ENCODE measurements at regions of chr6 and their contacts with region 1.

Region 1: GRCh38 chr6:26025894-26026832 is 61.1 kb upstream of the HFE start:
- DNase-seq: peak; percentile 96
- H3K4me3 Mint-ChIP-seq: peak overlapping the region; percentile 88
- H3K27ac Mint-ChIP-seq: peak overlapping the region; percentile 100
- H3K4me1 Mint-ChIP-seq: peaks cover 86% of the 10 kb centered on the region
- H3K27me3 Mint-ChIP-seq: peaks cover 3% of the 10 kb centered on the region

Region 2: DNA sequence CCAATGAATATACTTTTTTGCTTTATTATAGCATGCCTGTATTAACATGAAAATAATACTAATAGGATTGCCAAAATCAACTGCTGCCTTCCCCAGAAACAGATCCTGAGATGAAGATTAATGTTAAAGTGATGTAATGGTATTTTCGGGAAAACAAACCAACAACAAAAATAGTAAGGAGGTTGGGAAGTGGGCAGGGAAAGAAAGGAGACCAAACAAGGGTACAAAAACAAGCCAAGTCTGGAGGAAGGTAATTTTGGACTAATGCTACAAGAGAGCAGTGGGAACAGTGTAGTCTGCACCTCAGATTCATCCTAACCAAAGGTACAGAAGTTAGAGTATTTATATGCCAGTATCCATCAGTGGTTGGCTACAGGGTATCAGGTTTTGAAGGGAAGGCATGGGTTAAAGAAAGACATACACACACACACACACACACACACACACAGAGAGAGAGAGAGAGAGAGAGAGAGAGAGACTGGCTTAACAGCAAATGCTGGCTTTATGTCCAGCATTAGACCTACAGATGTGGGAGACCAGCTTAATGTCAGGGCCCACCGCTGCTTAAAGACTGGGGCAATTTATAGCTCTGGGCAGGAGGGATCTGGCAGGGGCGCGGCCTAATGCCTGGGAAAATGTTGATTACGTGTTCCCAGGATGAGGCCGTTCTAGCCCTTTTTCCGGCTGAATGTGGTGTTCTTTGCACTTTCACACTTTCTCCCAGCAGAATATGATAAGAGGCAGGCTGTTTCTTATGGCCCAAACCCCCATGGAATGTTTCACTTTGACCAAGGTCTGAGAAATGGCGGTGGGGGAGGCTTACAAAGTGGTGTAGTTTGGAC is 190.5 kb before region 1 on chr6:
- CTCF ChIA-PET with region 1: no interaction called
- POLR2A ChIA-PET with region 1: no interaction called
- DNase-seq: no peak
- H3K4me3 Mint-ChIP-seq: no peak overlapping the region
- H3K27ac Mint-ChIP-seq: no peak overlapping the region
- H3K4me1 Mint-ChIP-seq: no peaks in the 10 kb centered on the region
- H3K27me3 Mint-ChIP-seq: peaks cover 9% of the 10 kb centered on the region

Region 3: DNA sequence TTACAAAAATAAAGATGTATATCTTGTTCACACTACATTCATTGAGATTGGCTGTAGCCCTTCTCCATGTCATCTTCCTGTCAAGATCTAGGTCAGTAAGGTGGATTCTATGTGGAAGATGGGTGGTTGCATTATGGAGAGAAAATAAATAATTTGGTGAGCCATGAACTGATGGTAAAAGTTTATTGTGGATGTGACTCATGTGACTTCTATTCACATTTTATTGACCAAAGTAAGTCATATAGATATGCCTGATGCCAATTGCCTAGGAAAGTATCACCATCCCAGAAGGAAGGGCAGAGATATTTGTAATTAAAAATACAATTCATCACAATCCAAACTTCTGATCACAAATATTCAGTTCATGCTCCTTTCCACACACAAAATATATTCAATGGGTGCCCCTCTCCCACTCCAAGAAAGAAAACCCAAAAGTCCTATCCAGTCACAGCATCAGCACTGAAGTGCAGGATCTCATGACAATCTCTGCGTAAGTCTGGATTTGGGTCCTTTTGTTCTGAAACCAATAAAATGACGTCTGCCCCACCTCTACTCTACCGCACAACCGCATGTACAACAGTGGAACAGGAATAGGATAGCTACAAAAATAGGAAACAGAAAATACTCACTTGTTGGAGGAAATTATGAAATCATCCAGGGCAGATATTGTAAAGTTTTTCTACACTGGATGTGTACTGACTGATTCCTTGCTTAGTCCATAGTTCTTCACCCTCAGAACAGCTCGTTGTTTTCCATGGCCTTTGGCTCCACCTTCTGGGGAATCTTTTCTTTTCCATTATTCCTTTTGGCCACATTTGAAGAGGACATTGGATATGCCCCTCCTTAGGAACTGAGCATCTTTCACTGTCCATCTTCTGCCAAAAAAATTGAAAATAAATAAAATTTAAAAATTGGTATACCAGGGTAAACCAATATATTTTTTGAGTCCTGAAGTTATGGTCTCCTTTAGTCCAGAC is 136.0 kb before region 1 on chr6:
- CTCF ChIA-PET with region 1: no interaction called
- POLR2A ChIA-PET with region 1: no interaction called
- DNase-seq: peak; percentile 15
- H3K4me3 Mint-ChIP-seq: no peak overlapping the region
- H3K27ac Mint-ChIP-seq: no peak overlapping the region
- H3K4me1 Mint-ChIP-seq: no peaks in the 10 kb centered on the region
- H3K27me3 Mint-ChIP-seq: peaks cover 2% of the 10 kb centered on the region

Region 4: DNA sequence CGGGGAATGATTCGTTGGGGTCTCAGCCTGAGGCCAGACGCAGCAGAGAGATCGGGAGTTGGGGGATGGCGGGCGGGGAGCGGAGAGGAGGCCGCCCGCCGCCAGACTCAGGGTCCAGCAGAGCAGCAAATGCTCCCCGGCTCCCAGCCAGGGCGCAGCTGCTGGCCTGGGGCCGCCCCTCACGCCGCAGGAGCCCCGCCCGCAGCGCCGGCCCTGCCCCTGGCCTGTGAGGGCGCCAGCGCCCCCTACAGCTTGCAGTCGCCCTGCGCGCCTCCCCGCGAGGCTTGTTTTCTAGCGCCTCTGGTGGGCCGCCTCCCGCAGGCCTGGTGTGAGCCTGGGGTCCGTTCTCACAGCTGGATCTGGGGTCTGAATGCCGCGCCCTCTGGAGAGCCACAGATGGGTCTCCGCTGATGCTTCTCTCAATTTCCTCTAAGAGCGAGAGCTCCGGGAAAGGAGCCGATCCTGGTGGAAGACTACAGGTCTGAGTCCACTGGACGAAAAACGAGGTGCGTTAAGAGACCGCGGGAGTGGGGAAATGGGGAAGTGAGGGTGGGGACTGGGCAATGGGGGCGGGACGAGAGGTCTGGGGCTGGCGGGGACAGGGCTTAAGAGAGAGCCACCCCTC is 33.6 kb before region 1 on chr6:
- CTCF ChIA-PET with region 1: interaction called, 24 read pairs
- POLR2A ChIA-PET with region 1: interaction called, 11 read pairs
- DNase-seq: peak; percentile 92
- H3K4me3 Mint-ChIP-seq: peak overlapping the region; percentile 94
- H3K27ac Mint-ChIP-seq: peak overlapping the region; percentile 93
- H3K4me1 Mint-ChIP-seq: peaks cover 38% of the 10 kb centered on the region
- H3K27me3 Mint-ChIP-seq: no peaks in the 10 kb centered on the region

Region 5: DNA sequence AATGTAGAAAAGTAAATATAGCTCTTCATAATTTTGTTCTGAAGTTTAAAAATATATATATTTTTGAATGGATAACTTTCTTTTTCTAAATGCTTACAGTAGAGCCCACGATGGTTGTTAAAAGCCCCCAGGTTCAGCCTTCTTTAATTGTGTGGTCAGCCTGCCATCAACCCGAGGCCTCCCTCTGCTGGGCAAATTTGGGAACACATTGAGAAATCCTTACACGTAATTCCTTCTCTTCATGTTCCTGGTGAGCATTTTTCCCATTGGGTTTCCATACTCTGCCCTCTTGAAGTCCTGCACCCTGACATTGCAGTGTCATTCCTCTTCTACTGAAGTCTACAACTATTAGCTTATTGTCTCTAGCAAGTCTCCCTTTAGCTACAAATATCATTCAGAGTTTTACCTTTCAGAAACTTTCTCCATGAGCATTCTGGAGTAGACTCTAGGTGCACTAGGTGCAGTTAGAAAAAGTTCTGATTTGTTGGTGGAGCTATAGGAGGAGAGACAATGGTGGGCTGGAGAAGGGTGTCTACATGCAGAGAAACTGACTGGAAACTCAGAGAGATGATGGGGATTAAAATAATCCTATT is 23.0 kb before region 1 on chr6:
- CTCF ChIA-PET with region 1: interaction called, 113 read pairs
- POLR2A ChIA-PET with region 1: no interaction called
- DNase-seq: peak; percentile 55
- H3K4me3 Mint-ChIP-seq: no peak overlapping the region
- H3K27ac Mint-ChIP-seq: no peak overlapping the region
- H3K4me1 Mint-ChIP-seq: peaks cover 12% of the 10 kb centered on the region
- H3K27me3 Mint-ChIP-seq: no peaks in the 10 kb centered on the region

Region 6: GRCh38 chr6:26045065-26045927 is 19.1 kb after region 1 on chr6:
- CTCF ChIA-PET with region 1: interaction called, 121 read pairs
- POLR2A ChIA-PET with region 1: interaction called, 504 read pairs
- DNase-seq: peak; percentile 93
- H3K4me3 Mint-ChIP-seq: peak overlapping the region; percentile 83
- H3K27ac Mint-ChIP-seq: peak overlapping the region; percentile 99
- H3K4me1 Mint-ChIP-seq: peaks cover 44% of the 10 kb centered on the region
- H3K27me3 Mint-ChIP-seq: no peaks in the 10 kb centered on the region

Region 7: DNA sequence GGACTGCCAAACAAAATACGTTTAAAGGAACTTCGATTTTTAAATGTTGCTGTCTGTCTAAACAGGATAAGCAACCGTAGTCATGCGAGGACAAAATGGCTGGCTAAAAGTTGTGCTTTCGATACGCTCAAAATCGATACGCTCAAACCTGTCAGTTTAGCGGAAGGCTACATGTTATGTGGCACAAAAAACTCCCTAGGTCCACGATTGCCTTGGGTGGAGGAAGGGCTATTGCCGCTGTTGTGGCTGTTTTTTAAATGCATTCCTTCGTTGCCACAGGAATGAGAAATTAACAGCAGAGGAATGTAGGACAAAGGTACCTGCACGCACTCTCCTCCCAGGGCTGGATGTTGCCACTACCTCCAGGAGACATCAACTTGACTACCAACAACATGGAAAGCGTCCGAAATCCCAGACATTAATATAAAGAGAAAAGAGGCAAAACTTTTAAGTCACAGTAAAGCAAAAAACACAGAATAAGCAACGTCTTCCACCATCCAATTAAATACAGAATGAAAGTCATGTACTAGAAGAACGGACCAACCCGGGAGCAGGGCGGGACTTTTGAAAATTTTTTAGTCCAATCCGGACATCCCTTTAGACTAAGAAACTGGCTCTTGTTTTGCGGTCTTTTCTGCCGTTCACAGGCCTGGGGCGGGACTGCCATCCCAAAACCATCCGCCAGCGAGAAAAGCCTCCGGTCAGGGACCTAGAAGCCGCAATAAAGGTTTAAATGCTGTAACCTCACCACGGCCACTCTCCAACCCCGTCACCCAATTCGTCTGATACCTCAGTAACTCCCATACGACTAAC is 28.9 kb after region 1 on chr6:
- CTCF ChIA-PET with region 1: interaction called, 5 read pairs
- POLR2A ChIA-PET with region 1: interaction called, 504 read pairs
- DNase-seq: peak; percentile 94
- H3K4me3 Mint-ChIP-seq: peak overlapping the region; percentile 87
- H3K27ac Mint-ChIP-seq: peak overlapping the region; percentile 99
- H3K4me1 Mint-ChIP-seq: peaks cover 40% of the 10 kb centered on the region
- H3K27me3 Mint-ChIP-seq: no peaks in the 10 kb centered on the region

Region 8: DNA sequence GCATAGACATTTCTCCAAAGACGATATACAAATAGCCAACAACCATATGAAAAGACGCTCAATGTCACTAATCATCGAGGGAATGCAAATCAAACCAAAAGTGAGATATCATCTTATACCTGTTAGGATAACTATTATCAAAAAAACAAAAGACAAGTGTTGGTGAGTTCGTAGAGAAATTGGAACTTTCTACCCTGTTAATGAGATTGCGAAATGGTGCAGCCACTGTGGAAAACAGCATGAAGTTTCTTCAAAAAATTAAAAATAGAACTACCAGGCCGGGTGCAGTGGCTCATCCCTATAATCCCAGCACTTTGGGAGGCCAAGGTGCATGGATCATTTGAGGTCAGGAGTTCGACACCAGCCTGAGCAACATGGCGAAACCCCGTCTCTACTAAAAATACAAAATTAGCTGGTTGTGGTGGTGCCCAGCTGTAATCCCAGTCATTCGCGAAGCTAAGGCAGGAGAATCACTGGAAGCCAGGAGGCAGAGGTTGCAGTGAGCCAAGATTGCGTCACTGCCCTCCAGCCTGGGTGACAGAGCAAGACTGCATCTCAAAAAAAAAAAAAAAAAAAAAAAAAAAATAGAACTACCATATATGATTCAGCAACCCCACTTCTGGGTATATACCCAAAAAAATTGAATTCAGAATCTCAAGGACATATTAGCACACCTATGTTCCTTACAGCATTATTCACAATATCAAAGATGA is 1616.7 kb after region 1 on chr6:
- CTCF ChIA-PET with region 1: no interaction called
- POLR2A ChIA-PET with region 1: no interaction called
- DNase-seq: no peak
- H3K4me3 Mint-ChIP-seq: no peak overlapping the region
- H3K27ac Mint-ChIP-seq: no peak overlapping the region
- H3K4me1 Mint-ChIP-seq: no peaks in the 10 kb centered on the region
- H3K27me3 Mint-ChIP-seq: peaks cover 19% of the 10 kb centered on the region

Measured in activated CD4-positive, alpha-beta T cell treated with anti-CD3 and anti-CD28 coated beads, Interleukin-2, amount 10 ng/mL, durations not matched to agents 7 days and 5 days (primary cell).